ENCODE measurements at regions of chr10 and their contacts with region 1.

Region 1: GRCh38 chr10:23438550-23439441 is at the start of gene OTUD1:
- DNase-seq: peak; percentile 95 to 98
- ATAC-seq: peak; percentile 91 to 96 (median 93)
- H3K4me3 ChIP-seq: peak within 1 kb of the TSS; percentile 62 to 98 (median 88)
- H3K27ac ChIP-seq: peak within 1 kb of the TSS; percentile 91 to 100 (median 98)
- H3K4me1 ChIP-seq: peaks cover 0 to 43% (median 30%) of the 10 kb centered on the region in 9 donors
- H3K27me3 ChIP-seq: no peaks in the 10 kb centered on the region
- CTCF ChIP-seq: peak in 3 of 9 donors; percentile 18 to 33 (median 25)
- total RNA-seq, gene OTUD1: 11.4 to 617 (median 40.9) TPM

Region 2: DNA sequence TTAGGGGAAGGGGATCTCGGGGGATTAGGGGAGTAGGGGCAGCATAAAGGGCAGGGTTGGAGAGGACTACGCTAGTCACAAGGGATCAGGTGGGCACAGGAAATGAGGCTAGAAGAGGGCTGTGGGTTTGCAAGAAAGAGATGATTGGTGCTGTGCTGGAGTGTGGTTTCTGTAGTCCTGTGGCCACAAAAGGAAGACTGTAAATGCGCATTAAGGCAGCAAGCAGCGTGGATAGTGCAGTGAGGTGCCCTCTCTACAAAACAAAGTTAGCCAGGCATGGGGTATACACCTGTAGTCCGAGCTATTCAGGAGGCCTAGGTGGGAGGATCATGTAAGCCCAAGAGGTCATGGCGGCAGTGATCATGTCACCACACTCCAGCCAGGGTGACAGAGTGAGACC is 1692.7 kb before region 1 on chr10:
- intact Hi-C with region 1: loop called in 1 of 10 experiments (anchors 10 kb)
- DNase-seq: no peak
- ATAC-seq: peak in 2 of 8 donors; percentile 13 to 34
- H3K4me3 ChIP-seq: no peak overlapping the region
- H3K27ac ChIP-seq: no peak overlapping the region
- H3K4me1 ChIP-seq: no peaks in the 10 kb centered on the region
- H3K27me3 ChIP-seq: no peaks in the 10 kb centered on the region
- CTCF ChIP-seq: no peak

Region 3: DNA sequence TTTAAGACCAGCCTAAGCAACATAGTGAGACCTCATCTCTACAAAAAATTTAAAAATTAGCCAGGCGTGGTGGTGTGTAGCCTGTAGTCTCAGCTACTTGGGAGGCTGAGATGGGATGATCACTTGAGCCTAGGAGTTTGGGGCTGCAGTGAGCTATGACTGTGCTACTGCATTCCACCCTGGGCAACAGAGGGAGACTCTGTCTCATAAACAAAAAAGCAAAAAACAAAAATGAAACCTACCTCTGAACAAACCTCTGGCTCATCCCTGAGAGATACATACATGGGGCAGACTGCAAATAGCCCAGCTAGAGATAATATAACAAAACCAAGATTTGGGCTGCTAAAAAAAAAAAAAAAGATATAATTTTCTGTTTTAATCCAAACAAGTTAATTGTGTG is 113.7 kb before region 1 on chr10:
- intact Hi-C with region 1: loop called in 1 of 10 experiments (anchors 10 kb)
- DNase-seq: no peak
- ATAC-seq: peak in 3 of 8 donors; percentile 48 to 64 (median 57)
- H3K4me3 ChIP-seq: no peak overlapping the region
- H3K27ac ChIP-seq: no peak overlapping the region
- H3K4me1 ChIP-seq: no peaks in the 10 kb centered on the region
- H3K27me3 ChIP-seq: peaks cover 0 to 14% (median 0%) of the 10 kb centered on the region in 7 donors
- CTCF ChIP-seq: peak in 7 of 9 donors; percentile 22 to 50 (median 27)

Region 4: GRCh38 chr10:23338178-23338828 is 100.5 kb before region 1 on chr10:
- intact Hi-C with region 1: loop called in 5 of 10 experiments (anchors 2 to 10 kb)
- DNase-seq: no peak
- ATAC-seq: no peak
- H3K4me3 ChIP-seq: no peak overlapping the region
- H3K27ac ChIP-seq: no peak overlapping the region
- H3K4me1 ChIP-seq: peaks cover 0 to 19% (median 4%) of the 10 kb centered on the region in 9 donors
- H3K27me3 ChIP-seq: peaks cover 0 to 11% (median 0%) of the 10 kb centered on the region in 7 donors
- CTCF ChIP-seq: no peak

Region 5: GRCh38 chr10:23344241-23344841 is 94.5 kb before region 1 on chr10 and contains the start of gene C10orf67:
- intact Hi-C with region 1: loop called in 6 of 10 experiments (anchors 2 to 10 kb)
- DNase-seq: peak; percentile 43 to 53
- ATAC-seq: peak; percentile 45 to 82 (median 78)
- H3K4me3 ChIP-seq: peak within 1 kb of the TSS; percentile 22 to 70 (median 60)
- H3K27ac ChIP-seq: peak within 1 kb of the TSS; percentile 13 to 91 (median 69)
- H3K4me1 ChIP-seq: peaks cover 0 to 62% (median 32%) of the 10 kb centered on the region in 9 donors
- H3K27me3 ChIP-seq: peaks cover 0 to 43% (median 0%) of the 10 kb centered on the region in 7 donors
- CTCF ChIP-seq: no peak
- total RNA-seq, gene C10orf67: 0.25 to 1.5 (median 0.47) TPM

Region 6: GRCh38 chr10:23399701-23400144 is 39.1 kb before region 1 on chr10:
- intact Hi-C with region 1: loop called in 2 of 10 experiments (anchors 5 kb)
- DNase-seq: peak; percentile 28 to 52
- ATAC-seq: peak; percentile 84 to 98 (median 94)
- H3K4me3 ChIP-seq: no peak overlapping the region
- H3K27ac ChIP-seq: peak overlapping the region in 8 of 10 donors; percentile 11 to 88 (median 80)
- H3K4me1 ChIP-seq: peaks cover 0 to 36% (median 8%) of the 10 kb centered on the region in 9 donors
- H3K27me3 ChIP-seq: no peaks in the 10 kb centered on the region
- CTCF ChIP-seq: no peak

Region 7: GRCh38 chr10:23525406-23525805 is 86.6 kb after region 1 on chr10:
- intact Hi-C with region 1: loop called in 1 of 10 experiments (anchors 10 kb)
- DNase-seq: peak in 1 of 2 donors; percentile 18
- ATAC-seq: peak in 6 of 8 donors; percentile 55 to 84 (median 70)
- H3K4me3 ChIP-seq: no peak overlapping the region
- H3K27ac ChIP-seq: no peak overlapping the region
- H3K4me1 ChIP-seq: no peaks in the 10 kb centered on the region
- H3K27me3 ChIP-seq: no peaks in the 10 kb centered on the region
- CTCF ChIP-seq: peak; percentile 17 to 69 (median 60)